Caco-2 (cell line): ENCODE measurements at regions of chr3 and their contacts with region 1.

Region 1: DNA sequence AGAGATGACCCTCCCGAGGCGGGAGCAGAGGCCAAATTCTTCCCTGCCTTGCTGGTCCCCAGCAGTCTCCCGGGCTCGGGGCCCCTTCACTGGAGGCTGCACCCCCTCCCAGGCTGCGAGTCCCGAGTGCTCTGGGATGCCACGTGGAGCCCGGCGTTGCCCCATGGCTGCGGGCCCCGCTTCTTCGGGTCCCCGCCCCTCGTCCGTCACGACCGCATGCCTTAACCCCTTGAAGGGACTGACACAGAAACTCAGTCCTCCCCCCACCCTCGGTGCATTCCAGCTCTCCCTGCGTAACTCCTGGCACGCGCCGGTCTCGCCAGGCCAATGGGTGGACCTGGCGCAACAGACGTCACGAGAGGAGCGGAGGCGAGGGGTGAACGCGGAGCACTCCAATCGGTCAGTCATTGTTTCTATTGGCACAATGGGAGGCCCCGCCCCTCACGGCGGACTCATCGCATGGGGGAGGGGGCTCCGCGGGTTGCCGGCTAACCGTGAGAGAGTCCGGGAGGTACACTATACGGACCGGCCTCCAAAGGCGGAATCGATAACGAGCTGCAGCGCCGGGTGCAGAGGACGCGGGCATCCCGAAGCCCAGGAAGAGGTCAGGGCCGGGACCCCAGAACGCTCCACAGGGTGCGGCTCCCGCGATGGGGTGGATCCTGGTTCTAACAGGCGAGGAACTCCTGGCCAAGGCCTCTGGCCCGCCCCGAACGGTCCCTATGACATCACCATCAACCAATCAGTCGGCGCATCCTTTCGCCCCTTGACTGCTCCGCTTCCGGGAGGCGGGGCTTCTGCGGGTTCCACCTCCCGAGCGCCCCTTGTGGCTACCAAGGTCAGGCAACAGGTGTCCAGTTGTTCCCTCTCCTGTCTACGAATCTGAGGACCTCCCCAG is 978 bp upstream of the CELSR3 start:
- DNase-seq: peak; percentile 99
- H3K4me3 ChIP-seq: peak overlapping the region; percentile 65
- H3K4me3 Mint-ChIP-seq: peak overlapping the region; percentile 93
- H3K27ac Mint-ChIP-seq: peak overlapping the region; percentile 99
- H3K4me1 ChIP-seq: peaks cover 10% of the 10 kb centered on the region
- H3K4me1 Mint-ChIP-seq: peaks cover 5% of the 10 kb centered on the region
- H3K27me3 ChIP-seq: no peaks in the 10 kb centered on the region
- H3K27me3 Mint-ChIP-seq: no peaks in the 10 kb centered on the region
- CTCF ChIP-seq: peak; percentile 84 to 86

Region 2: DNA sequence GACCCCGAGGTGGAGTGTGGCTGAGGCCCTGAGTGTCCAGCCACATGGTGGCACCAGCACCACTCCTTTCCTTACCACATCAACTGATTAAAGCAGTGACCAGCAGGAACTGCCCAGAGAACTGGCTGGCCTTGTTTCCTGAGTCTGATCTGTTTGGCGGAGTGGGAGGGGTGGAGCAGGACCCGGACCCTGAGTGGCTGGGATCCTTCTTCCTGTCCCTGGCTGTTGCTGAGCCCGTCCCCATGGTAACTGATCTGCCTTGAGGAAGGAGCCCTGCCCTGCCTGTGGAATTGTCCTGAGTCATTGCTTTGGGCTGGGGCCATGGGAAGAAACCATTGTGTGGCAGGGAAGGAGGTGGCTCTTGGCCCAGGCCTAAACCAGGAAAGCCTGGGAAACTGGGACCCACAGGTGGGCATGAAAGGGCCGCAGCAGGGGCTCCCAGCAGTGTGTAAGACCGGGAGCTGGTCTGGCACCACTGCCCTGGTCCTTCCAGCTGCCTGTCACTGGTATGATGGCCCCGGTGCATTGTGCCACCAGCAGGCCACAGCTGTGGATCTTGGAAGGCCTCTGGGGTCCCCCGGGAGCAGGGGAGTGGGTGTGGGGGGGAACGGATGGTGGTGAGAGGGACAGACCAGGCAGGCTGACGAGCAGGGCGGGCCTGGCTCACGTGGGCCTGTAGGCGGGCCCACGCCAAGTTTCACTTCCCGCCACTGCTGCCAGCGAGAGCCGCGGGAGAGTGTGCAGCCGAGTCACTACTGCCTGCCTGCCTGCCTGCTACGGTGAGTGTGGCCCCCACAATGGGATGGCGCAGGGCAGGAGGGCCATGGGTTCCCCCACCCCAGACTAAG is 197.9 kb before region 1 on chr3:
- CTCF ChIA-PET with region 1: no interaction called
- POLR2A ChIA-PET with region 1: no interaction called
- intact Hi-C with region 1: loop called (anchors 10 kb)
- DNase-seq: peak; percentile 97
- H3K4me3 ChIP-seq: no peak overlapping the region
- H3K4me3 Mint-ChIP-seq: peak overlapping the region; percentile 56
- H3K27ac Mint-ChIP-seq: peak overlapping the region; percentile 99
- H3K4me1 ChIP-seq: peaks cover 19% of the 10 kb centered on the region
- H3K4me1 Mint-ChIP-seq: peaks cover 16% of the 10 kb centered on the region
- H3K27me3 ChIP-seq: no peaks in the 10 kb centered on the region
- H3K27me3 Mint-ChIP-seq: no peaks in the 10 kb centered on the region
- CTCF ChIP-seq: peak; percentile 61 to 83

Region 3: DNA sequence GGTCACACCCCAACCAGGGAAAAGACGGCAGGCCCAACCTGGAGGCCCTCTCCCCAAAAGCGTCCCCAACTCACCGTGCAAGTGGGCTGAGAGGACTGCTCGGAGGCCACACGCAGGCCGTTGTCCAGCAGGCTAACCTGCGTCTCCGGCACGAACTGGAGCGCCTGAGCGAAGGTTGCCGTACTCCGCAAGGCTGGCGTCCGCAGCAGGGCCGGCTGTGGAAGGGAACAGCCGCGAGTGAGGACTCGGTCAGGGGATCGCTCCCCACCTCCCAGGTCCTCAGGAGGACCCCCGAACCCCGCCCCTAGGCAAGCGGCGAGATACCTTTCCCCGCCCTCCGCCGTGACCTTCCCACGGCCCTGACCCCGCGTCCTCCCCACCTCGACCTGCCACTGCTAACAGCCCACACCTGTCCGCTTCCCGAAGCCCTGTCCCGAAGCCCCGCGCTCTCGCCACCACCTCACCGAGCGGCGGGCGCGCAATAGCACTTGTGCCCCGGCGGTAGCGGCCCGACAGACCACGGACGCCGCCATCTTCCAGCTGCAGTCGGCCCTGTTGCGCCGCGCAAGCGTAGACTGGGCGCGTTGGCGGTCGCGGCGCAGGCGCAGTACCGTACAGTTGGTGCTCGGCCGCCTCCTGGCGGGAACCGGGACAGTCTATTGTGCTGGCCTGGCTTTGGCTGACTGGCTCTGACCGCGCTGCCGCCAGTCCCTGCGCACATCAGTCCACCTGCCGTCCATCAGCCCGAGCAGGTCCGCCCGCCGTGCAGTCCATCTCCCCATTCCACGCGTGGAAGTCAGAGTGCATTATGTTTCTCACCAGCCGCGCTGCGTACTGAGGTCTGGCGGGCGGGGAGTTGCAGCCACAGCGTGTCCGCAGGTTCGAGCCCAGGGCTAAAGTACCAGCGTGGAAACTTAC is 54.3 kb before region 1 on chr3 and contains the start of gene UQCRC1:
- CTCF ChIA-PET with region 1: interaction called, 3 read pairs
- POLR2A ChIA-PET with region 1: interaction called, 4 read pairs
- intact Hi-C with region 1: loop called (anchors 2 kb)
- DNase-seq: peak; percentile 91 to 95
- H3K4me3 ChIP-seq: peak within 1 kb of the TSS; percentile 87
- H3K4me3 Mint-ChIP-seq: peak within 1 kb of the TSS; percentile 91
- H3K27ac Mint-ChIP-seq: peak within 1 kb of the TSS; percentile 96
- H3K4me1 ChIP-seq: peaks cover 11% of the 10 kb centered on the region
- H3K4me1 Mint-ChIP-seq: peaks cover 7% of the 10 kb centered on the region
- H3K27me3 ChIP-seq: no peaks in the 10 kb centered on the region
- H3K27me3 Mint-ChIP-seq: no peaks in the 10 kb centered on the region
- CTCF ChIP-seq: peak; percentile 45 to 68
- total RNA-seq, gene UQCRC1: 278 and 283 TPM in 2 replicates

Region 4: GRCh38 chr3:48635222-48636021 is 28.2 kb before region 1 on chr3 and contains the start of gene SLC26A6:
- CTCF ChIA-PET with region 1: interaction called, 7 read pairs
- POLR2A ChIA-PET with region 1: interaction called, 5 read pairs
- intact Hi-C with region 1: loop called (anchors 1 kb)
- DNase-seq: peak; percentile 96 to 98
- H3K4me3 ChIP-seq: peak within 1 kb of the TSS; percentile 83
- H3K4me3 Mint-ChIP-seq: peak within 1 kb of the TSS; percentile 78
- H3K27ac Mint-ChIP-seq: peak within 1 kb of the TSS; percentile 59
- H3K4me1 ChIP-seq: peaks cover 19% of the 10 kb centered on the region
- H3K4me1 Mint-ChIP-seq: peaks cover 21% of the 10 kb centered on the region
- H3K27me3 ChIP-seq: no peaks in the 10 kb centered on the region
- H3K27me3 Mint-ChIP-seq: no peaks in the 10 kb centered on the region
- CTCF ChIP-seq: peak in 1 of 2 experiments; percentile 43
- total RNA-seq, gene SLC26A6: 54.7 and 59.4 TPM in 2 replicates

Region 5: DNA sequence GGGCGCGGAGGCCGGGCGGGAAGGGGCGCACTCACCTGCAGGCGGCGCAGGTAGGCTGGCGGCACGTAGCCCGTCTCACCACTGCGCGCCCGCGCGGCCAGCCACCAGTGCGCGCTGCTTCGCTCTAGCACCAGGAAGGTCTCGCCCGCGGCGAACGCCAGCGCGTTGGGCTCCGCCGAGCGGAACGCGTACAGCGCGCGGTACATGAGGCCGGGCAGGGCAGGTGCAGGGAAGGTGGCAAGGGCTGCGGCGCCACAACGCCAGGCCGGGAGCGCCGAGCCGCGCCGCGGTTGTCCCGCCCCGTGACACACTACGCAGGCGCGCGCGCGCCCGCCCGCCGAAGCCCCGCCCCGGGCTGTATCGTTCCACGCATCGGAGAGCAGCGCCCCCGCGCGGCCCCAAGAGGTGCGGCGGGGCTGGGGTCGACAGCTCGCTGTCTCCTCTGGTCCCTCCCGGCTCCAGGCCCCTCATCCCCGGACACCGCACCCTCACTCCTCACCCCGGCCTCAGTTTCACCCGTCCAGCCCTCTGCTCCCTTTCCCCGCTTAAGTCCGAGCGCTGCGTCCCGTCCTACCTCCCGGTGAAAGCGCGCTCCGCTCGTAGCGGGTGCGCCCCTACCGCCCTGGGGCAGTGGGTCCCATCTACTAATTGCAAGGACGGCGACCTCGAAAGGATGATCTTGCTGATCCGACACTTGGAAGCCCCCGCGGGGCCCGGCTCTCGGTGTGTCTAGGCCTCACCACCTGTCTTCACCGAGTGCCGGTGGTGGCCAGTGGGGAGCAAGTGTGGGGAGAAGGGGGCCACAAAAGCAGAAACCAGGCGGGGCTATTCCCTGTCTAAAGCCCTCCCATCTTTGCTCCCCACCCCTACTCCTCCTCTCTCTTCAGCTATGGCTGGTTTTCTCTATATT is 22.2 kb after region 1 on chr3 and contains the start of gene NCKIPSD:
- CTCF ChIA-PET with region 1: interaction called, 5 read pairs
- POLR2A ChIA-PET with region 1: interaction called, 14 read pairs
- intact Hi-C with region 1: no loop called
- DNase-seq: peak; percentile 83 to 90
- H3K4me3 ChIP-seq: peak within 1 kb of the TSS; percentile 55
- H3K4me3 Mint-ChIP-seq: peak within 1 kb of the TSS; percentile 86
- H3K27ac Mint-ChIP-seq: peak within 1 kb of the TSS; percentile 84
- H3K4me1 ChIP-seq: peaks cover 7% of the 10 kb centered on the region
- H3K4me1 Mint-ChIP-seq: peaks cover 14% of the 10 kb centered on the region
- H3K27me3 ChIP-seq: no peaks in the 10 kb centered on the region
- H3K27me3 Mint-ChIP-seq: no peaks in the 10 kb centered on the region
- CTCF ChIP-seq: peak; percentile 58 to 88
- total RNA-seq, gene NCKIPSD: 30.1 and 30.2 TPM in 2 replicates

Region 6: GRCh38 chr3:48716982-48717746 is 53.5 kb after region 1 on chr3 and contains the start of gene IP6K2:
- CTCF ChIA-PET with region 1: no interaction called
- POLR2A ChIA-PET with region 1: interaction called, 12 read pairs
- intact Hi-C with region 1: no loop called
- DNase-seq: peak; percentile 99
- H3K4me3 ChIP-seq: peak within 1 kb of the TSS; percentile 55
- H3K4me3 Mint-ChIP-seq: peak within 1 kb of the TSS; percentile 66
- H3K27ac Mint-ChIP-seq: peak within 1 kb of the TSS; percentile 88
- H3K4me1 ChIP-seq: peaks cover 41% of the 10 kb centered on the region
- H3K4me1 Mint-ChIP-seq: peaks cover 42% of the 10 kb centered on the region
- H3K27me3 ChIP-seq: no peaks in the 10 kb centered on the region
- H3K27me3 Mint-ChIP-seq: no peaks in the 10 kb centered on the region
- CTCF ChIP-seq: no peak
- total RNA-seq, gene IP6K2: 91.7 and 100 TPM in 2 replicates

Region 7: GRCh38 chr3:48765376-48765775 is 101.7 kb after region 1 on chr3:
- CTCF ChIA-PET with region 1: no interaction called
- POLR2A ChIA-PET with region 1: no interaction called
- intact Hi-C with region 1: no loop called
- DNase-seq: no peak
- H3K4me3 ChIP-seq: no peak overlapping the region
- H3K4me3 Mint-ChIP-seq: no peak overlapping the region
- H3K27ac Mint-ChIP-seq: no peak overlapping the region
- H3K4me1 ChIP-seq: no peaks in the 10 kb centered on the region
- H3K4me1 Mint-ChIP-seq: no peaks in the 10 kb centered on the region
- H3K27me3 ChIP-seq: no peaks in the 10 kb centered on the region
- H3K27me3 Mint-ChIP-seq: no peaks in the 10 kb centered on the region
- CTCF ChIP-seq: peak in 1 of 2 experiments; percentile 24

Region 8: GRCh38 chr3:49255112-49255511 is 591.4 kb after region 1 on chr3:
- CTCF ChIA-PET with region 1: no interaction called
- POLR2A ChIA-PET with region 1: no interaction called
- intact Hi-C with region 1: no loop called
- DNase-seq: no peak
- H3K4me3 ChIP-seq: no peak overlapping the region
- H3K4me3 Mint-ChIP-seq: no peak overlapping the region
- H3K27ac Mint-ChIP-seq: no peak overlapping the region
- H3K4me1 ChIP-seq: no peaks in the 10 kb centered on the region
- H3K4me1 Mint-ChIP-seq: no peaks in the 10 kb centered on the region
- H3K27me3 ChIP-seq: no peaks in the 10 kb centered on the region
- H3K27me3 Mint-ChIP-seq: no peaks in the 10 kb centered on the region
- CTCF ChIP-seq: no peak